ENCODE measurements at regions of chr5 and their contacts with region 1.

Region 1: DNA sequence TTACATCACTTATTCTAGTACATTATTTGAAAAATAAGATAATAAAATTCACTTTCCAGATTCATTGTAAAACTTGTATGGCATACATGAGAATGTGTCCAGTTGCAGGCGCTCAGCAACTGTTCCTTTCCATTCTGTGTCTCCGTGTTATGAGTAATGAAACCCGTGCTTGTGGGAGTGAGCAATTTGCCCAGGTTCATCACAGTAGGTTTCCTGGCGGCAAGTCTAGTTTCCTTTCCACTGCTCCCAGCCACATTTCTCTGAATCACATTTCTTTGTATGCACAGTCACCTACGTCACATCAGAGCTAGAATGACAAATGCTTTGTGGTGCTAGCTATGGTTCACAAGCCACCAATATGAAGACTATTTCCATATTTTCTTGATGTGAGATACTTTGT is 39.9 kb downstream of the MOCS2 start:
- DNase-seq: peak; percentile 88
- H3K4me3 Mint-ChIP-seq: no peak overlapping the region
- H3K27ac Mint-ChIP-seq: peak overlapping the region; percentile 12
- H3K4me1 Mint-ChIP-seq: peaks cover 15% of the 10 kb centered on the region
- H3K27me3 Mint-ChIP-seq: no peaks in the 10 kb centered on the region

Region 2: GRCh38 chr5:52787600-52788504 is 281.8 kb before region 1 on chr5 and contains the starts of genes ITGA1 and PELO:
- CTCF ChIA-PET with region 1: no interaction called
- intact Hi-C with region 1: loop called (anchors 1 kb)
- DNase-seq: peak; percentile 79
- H3K4me3 Mint-ChIP-seq: peak within 1 kb of the TSS; percentile 84
- H3K27ac Mint-ChIP-seq: peak within 1 kb of the TSS; percentile 44
- H3K4me1 Mint-ChIP-seq: peaks cover 15% of the 10 kb centered on the region
- H3K27me3 Mint-ChIP-seq: peaks cover 4% of the 10 kb centered on the region
- total RNA-seq, gene ITGA1: 0.69 to 1.2 TPM
- total RNA-seq, gene PELO: 11.4 to 12.8 TPM

Region 3: DNA sequence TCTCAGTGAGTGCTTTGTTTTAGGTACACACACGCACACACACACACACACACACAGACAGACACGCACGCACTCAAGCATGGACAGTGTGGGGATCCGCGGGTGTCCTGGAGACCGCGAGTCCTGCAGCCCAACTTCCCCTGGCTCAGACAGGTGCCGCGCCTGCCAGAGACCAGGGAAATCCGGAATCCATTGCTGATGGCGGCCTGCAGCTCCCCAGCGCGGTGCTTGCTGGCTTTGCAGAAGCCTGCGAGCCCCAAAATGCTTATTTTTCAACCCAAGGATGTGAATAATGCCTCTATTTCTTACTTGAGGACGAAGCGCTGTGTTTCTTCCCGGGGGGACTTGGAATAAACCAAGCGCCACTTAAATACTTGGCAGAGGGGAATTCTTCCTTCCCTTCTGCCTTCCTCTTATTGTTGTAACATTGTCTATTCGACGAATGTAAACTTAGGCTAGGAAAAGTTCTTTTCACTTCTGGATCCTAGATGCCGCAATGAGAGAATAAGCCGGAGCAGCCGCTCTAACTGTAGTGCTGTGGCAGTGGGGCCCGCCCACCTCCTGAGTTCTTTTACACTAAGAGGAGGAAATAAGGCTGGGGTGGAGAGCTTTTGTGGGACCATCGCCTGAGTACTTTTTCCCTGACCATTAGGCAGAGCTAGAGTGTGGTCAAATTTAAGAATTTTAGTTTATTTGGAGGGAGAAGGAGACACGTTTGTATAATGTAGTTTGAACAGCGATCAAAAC is 79.7 kb before region 1 on chr5:
- CTCF ChIA-PET with region 1: interaction called, 4 read pairs
- intact Hi-C with region 1: loop called (anchors 1 kb)
- DNase-seq: peak; percentile 73
- H3K4me3 Mint-ChIP-seq: peak overlapping the region; percentile 79
- H3K27ac Mint-ChIP-seq: peak overlapping the region; percentile 50
- H3K4me1 Mint-ChIP-seq: peaks cover 21% of the 10 kb centered on the region
- H3K27me3 Mint-ChIP-seq: peaks cover 4% of the 10 kb centered on the region

Region 4: DNA sequence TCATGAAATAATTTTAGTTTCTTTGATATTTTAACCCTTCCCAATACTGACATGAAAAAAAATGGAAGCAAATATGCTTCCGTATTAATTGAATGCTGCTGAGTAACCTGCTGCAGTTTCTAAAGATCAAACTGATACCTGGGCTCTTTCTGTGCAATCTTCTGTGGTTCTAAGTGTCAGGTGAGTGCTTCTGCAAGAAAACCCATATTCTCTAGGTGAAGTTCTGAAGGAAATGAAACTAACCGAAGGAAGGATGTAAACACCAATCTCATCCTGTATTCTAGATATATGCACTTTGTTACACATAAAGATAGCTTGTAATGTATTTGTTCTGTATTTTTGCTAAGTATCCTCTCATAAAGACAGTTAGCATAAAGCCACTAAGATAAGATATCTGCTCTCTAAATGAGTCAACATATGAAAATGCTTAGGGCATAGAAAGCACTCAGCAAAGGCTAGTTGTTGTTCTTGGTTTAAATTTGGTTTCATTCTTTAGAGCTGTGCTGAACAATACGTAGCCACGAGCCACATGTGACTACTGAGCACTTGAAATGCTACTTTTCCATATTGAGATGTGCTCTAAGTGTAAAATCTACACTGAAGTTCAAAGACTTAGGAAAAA is 28.4 kb before region 1 on chr5:
- CTCF ChIA-PET with region 1: interaction called, 5 read pairs
- intact Hi-C with region 1: loop called (anchors 1 kb)
- DNase-seq: peak; percentile 22
- H3K4me3 Mint-ChIP-seq: no peak overlapping the region
- H3K27ac Mint-ChIP-seq: no peak overlapping the region
- H3K4me1 Mint-ChIP-seq: peaks cover 35% of the 10 kb centered on the region
- H3K27me3 Mint-ChIP-seq: peaks cover 6% of the 10 kb centered on the region

Region 5: DNA sequence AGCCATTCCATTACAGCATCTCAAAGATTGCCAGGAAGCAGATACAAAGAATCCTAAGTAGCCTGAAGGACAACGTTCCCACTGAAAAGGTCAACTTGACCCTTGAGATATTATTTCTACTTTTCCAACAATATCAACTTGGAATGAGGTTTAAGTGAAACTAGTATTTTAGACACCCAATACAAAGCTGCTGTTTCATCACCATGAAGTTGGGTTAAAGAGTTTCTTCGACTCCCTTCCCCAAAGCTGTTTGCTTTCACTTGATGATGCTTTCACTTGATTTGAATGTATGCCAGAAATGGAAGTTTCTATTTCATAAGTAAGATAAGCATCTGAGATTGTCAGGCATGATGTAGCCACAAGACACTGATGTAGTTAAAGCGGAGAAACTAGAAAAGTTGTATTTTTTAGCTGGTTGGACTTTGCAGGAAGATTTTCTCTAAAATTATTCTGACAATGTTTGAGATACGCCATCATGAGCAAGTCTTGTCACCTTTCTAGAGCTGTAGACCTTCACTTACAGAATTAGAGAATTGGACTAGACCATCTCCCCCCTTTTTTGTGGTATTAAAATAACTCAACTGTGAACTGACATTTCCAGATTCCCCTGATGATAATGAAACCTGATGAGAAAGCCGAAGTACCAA is 19.8 kb after region 1 on chr5:
- CTCF ChIA-PET with region 1: interaction called, 5 read pairs
- intact Hi-C with region 1: loop called (anchors 1 kb)
- DNase-seq: no peak
- H3K4me3 Mint-ChIP-seq: peak overlapping the region; percentile 45
- H3K27ac Mint-ChIP-seq: peak overlapping the region; percentile 61
- H3K4me1 Mint-ChIP-seq: peaks cover 32% of the 10 kb centered on the region
- H3K27me3 Mint-ChIP-seq: no peaks in the 10 kb centered on the region

Region 6: DNA sequence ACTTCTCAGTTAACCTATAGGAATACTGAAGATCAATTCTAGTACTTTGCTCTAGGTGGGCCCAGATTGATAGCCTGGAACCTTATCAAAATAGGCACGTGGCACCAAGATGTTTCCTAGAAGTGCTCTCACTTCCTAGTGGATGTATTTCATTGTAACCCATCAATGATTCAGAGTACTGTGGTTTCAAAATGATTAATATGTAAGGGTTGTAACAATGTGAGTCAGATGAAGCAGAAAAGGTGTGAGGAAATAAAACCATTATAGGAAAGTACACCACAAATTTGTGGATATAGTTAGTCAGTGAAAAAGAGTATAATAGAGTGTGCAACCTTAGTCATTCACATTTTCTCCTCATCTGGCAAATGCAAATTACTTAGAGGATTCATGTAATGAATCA is 233.5 kb after region 1 on chr5:
- CTCF ChIA-PET with region 1: no interaction called
- intact Hi-C with region 1: loop called (anchors 1 kb)
- DNase-seq: peak; percentile 22
- H3K4me3 Mint-ChIP-seq: no peak overlapping the region
- H3K27ac Mint-ChIP-seq: no peak overlapping the region
- H3K4me1 Mint-ChIP-seq: peaks cover 14% of the 10 kb centered on the region
- H3K27me3 Mint-ChIP-seq: peaks cover 18% of the 10 kb centered on the region

Measured in activated naive CD4-positive, alpha-beta T cell treated with anti-CD3 and anti-CD28 coated beads for 36 hours (primary cell).